Activated CD4-positive, alpha-beta T cell treated with anti-CD3 and anti-CD28 coated beads for 36 hours (primary cell): ENCODE measurements at regions of chr1 and their contacts with region 1.

Region 1: DNA sequence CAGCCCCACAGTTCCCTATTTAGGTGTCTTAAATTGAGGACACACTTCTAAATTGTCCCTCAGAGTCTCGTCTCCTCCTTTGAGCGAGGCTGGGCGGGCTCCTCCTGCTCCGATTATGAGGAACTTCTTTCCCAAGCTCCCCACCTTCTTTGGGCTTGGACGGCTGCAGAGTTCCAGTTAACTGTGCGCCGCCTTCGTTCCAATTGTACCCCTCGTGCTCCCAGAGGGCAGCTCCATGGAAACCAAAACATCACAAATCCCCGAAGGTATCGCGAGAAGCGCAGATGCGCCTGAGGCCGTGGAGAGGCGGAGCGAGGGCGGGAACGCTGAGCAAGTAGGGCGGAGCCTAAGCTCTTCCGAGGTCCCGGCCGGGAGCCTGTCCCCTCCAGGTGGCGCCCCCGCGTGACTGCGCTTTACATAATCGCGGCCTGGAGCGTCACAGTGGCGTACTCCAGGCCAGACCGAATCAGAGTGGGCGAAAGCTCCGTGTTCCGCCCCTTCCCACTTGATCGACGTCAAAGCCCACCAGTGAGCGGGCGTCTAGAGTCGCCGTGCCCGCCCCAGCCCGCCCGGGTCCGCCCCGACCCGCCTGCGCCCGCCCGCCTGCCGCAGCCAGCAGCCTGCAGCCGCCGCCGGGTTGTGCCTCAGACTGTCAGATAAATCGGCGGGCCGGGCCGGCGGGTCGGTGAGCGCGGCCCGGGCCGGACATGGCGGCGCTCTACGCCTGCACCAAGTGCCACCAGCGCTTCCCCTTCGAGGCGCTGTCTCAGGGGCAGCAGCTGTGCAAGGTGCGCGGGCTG is at the start of gene FAM76A:
- DNase-seq: peak; percentile 100
- ATAC-seq: peak; percentile 95
- H3K4me3 Mint-ChIP-seq: peak within 1 kb of the TSS; percentile 78
- H3K27ac Mint-ChIP-seq: peak within 1 kb of the TSS; percentile 93
- H3K4me1 Mint-ChIP-seq: peaks cover 15% of the 10 kb centered on the region
- H3K27me3 Mint-ChIP-seq: no peaks in the 10 kb centered on the region
- total RNA-seq, gene FAM76A: 7.4 to 8.1 TPM

Region 2: GRCh38 chr1:27489910-27490741 is 235.4 kb before region 1 on chr1 and contains the start of gene WASF2:
- CTCF ChIA-PET with region 1: no interaction called
- POLR2A ChIA-PET with region 1: no interaction called
- intact Hi-C with region 1: loop called in 1 of 2 experiments (anchors 1 kb)
- DNase-seq: peak; percentile 98
- ATAC-seq: peak; percentile 96
- H3K4me3 Mint-ChIP-seq: peak within 1 kb of the TSS; percentile 98
- H3K27ac Mint-ChIP-seq: peak within 1 kb of the TSS; percentile 99
- H3K4me1 Mint-ChIP-seq: peaks cover 28% of the 10 kb centered on the region
- H3K27me3 Mint-ChIP-seq: no peaks in the 10 kb centered on the region
- total RNA-seq, gene WASF2: 104 to 132 TPM

Region 3: DNA sequence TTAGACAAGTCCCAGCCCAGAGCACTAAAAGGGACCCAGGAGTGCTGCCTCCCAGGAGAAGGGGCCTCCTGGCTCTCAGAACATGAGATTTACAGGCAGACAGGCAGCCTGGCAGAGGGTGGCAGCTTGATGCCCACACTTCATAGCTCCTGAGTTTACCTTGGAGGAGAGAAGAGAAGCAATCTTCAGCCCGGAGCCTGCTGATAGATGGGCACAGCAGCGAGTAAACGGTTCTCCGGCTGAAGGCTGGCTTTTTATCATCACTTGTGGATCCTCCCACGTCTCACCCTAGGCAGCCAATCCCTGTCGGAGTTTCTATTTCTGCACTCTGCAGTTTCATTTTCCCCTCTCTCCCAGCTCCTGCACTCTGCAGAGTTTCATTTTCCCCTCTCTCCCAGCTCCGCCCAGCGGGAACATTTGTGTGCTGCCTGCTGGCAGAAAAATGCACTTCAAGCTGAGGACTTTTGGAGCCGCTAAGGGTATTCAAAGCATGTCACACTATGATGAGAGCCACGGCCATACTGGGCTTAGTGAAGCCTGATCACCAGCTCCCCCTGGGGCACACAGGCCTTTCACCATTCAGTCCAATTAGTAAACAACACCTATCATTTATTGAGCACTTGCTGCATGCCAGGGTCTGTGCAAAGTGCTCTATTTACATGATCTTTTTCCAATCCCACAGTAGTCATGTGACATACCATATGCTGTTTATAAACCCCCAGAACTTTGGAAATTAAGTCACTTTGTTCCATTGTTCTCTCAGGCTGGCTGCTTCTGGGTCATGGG is 53.4 kb before region 1 on chr1 and contains the start of gene IFI6:
- CTCF ChIA-PET with region 1: interaction called, 14 read pairs
- POLR2A ChIA-PET with region 1: interaction called, 9 read pairs
- intact Hi-C with region 1: loop called (anchors 1 to 5 kb)
- DNase-seq: peak; percentile 88
- ATAC-seq: peak; percentile 91
- H3K4me3 Mint-ChIP-seq: peak within 1 kb of the TSS; percentile 83
- H3K27ac Mint-ChIP-seq: peak within 1 kb of the TSS; percentile 89
- H3K4me1 Mint-ChIP-seq: peaks cover 31% of the 10 kb centered on the region
- H3K27me3 Mint-ChIP-seq: no peaks in the 10 kb centered on the region
- total RNA-seq, gene IFI6: 41.8 to 62.5 TPM

Region 4: DNA sequence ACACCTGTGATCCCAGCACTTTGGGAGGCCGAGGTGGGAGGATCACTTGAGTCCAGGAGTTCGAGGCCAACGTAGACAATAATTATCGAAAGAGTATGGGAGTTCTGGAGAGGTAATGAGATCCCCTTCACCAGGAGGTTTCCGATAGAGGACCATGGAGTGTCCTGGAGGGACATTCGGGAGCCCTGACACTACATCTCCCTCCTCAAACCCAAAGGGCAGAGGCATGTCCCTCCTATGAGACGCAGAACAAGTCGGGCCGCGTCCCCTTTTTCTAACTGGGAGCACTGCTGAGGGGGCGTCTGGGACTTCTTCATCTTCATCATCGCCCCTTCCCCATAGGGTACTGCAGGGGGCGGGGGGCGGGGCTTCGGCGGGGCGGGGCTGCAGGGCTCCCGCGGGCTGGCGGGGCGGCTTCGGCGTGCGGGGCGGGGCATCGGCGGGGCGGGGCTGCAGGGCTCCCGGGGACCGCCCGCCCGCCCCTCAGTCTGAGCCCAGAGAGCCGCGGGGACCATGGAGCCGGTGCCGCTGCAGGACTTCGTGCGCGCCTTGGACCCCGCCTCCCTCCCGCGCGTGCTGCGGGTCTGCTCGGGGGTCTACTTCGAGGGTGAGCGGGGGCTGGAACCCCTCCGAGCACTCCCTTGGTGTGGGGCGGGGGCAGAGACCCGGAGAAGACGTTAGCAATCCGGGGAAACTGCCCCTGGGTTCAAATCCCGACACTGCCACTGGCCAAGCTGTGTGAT is 146.7 kb after region 1 on chr1 and contains the start of gene THEMIS2:
- CTCF ChIA-PET with region 1: no interaction called
- POLR2A ChIA-PET with region 1: interaction called, 6 read pairs
- intact Hi-C with region 1: loop called in 1 of 2 experiments (anchors 1 kb)
- DNase-seq: peak; percentile 90
- ATAC-seq: peak; percentile 81
- H3K4me3 Mint-ChIP-seq: peak within 1 kb of the TSS; percentile 87
- H3K27ac Mint-ChIP-seq: peak within 1 kb of the TSS; percentile 83
- H3K4me1 Mint-ChIP-seq: peaks cover 36% of the 10 kb centered on the region
- H3K27me3 Mint-ChIP-seq: no peaks in the 10 kb centered on the region
- total RNA-seq, gene THEMIS2: 14.2 to 16.2 TPM